Caki2 (cell line): ENCODE measurements at regions of chr2 and their contacts with region 1.

Region 1: GRCh38 chr2:159615140-159615951 is 1.0 kb downstream of the BAZ2B start:
- DNase-seq: peak; percentile 79

Region 2: GRCh38 chr2:159454166-159454565 is 161.2 kb before region 1 on chr2:
- in situ Hi-C with region 1: no loop called
- DNase-seq: no peak

Region 3: DNA sequence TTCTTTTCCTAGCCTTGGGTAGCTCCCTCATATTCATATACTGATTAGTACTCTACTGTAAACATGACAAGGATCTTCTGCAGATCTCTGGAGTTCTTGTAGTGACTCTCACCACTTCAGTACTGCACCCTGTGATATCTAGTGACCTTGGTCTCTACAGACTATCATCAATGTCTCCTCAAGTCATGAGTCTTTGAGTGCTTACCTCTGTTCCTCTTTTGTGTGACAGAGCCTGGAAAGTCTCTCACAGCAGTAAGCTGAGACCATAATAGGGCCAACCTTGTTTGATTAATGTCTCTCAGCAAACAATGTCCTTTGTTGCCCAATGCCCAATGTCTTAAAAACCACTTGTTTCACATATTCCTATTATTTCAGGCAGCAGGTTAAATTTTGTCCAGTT is 35.2 kb after region 1 on chr2:
- in situ Hi-C with region 1: no loop called
- DNase-seq: no peak

Region 4: GRCh38 chr2:159712143-159712928 is 97.0 kb after region 1 on chr2 and contains the start of gene MARCHF7:
- in situ Hi-C with region 1: loop called (anchors 25 kb)
- DNase-seq: peak; percentile 97
- total RNA-seq, gene MARCHF7: 62.0 and 74.2 TPM in 2 replicates